Sciatic nerve (tissue), 2 donors: ENCODE measurements at regions of chr5 and their contacts with region 1.

Region 1: DNA sequence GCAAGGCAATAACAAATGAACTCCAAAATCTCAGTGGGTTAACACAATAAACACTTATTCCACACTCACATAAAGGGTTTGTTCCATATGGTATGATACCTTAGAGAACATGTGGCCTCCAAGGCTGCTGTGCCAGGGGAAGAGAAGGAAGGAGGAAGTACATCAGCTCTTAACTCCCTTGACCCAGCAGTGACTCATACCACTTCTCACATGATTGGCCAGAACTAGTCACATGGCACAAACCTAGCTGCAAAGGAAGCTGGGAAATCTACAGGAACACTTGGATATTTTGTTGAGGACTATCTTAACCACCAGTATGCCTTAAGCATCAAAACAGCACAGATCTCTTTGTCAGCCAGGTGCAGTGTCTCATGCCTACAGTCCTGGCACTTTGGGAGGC is 99.3 kb downstream of the SLIT3 start:
- DNase-seq: no peak
- ATAC-seq: no peak

Region 2: DNA sequence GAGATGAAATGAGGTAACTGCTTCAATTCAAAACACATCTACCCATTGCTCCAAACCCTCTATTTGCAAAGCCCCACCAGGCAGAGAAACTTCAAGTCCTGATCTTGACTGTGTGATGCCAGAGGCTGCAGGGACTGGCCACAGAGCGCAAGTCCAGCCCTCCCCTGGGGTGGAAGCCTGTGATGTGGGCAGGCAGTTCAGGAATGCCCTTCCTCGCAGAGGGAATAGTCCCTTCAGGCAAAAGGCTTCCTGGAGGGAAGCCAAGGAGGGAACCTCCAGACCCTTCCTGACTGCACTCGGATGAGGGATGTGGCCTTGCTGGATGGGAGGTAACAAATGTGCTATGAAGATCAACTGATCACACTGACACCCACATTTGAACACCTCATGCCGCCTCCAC is 31.8 kb before region 1 on chr5:
- intact Hi-C with region 1: loop called (anchors 2 kb)
- DNase-seq: no peak
- ATAC-seq: no peak